AG04449 (cell line): ENCODE measurements at regions of chr14 and their contacts with region 1.

Region 1: DNA sequence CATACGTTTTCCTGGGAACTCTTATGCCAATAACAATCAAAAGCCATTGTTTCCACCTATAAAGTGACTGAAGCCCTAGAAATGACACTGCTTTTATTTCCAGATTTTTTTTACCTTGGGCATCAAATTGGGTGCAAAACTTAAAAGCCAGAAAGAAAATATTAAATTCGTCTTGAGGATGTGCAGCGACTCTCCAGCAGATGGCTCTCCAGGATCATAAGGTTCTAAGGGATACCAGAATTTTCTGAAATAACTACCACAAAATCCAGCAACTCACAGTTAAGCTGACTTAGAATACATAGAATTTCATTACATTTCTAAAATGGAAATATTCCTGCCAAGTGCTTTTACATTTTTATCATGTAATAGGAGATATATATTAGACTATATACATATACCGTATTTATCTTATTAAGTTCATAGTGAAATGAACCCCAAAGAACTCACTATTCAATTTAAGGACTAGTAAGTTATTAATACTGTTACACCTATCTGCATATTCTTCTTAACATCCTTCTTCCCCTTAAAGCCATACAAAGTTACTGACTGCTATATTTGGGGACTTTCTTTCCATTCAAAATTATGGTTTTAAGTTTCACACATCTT is 44.0 kb downstream of the ARMH4 start:
- DNase-seq: no peak
- H3K4me3 ChIP-seq: no peak overlapping the region
- CTCF ChIP-seq: peak; percentile 52

Region 2: DNA sequence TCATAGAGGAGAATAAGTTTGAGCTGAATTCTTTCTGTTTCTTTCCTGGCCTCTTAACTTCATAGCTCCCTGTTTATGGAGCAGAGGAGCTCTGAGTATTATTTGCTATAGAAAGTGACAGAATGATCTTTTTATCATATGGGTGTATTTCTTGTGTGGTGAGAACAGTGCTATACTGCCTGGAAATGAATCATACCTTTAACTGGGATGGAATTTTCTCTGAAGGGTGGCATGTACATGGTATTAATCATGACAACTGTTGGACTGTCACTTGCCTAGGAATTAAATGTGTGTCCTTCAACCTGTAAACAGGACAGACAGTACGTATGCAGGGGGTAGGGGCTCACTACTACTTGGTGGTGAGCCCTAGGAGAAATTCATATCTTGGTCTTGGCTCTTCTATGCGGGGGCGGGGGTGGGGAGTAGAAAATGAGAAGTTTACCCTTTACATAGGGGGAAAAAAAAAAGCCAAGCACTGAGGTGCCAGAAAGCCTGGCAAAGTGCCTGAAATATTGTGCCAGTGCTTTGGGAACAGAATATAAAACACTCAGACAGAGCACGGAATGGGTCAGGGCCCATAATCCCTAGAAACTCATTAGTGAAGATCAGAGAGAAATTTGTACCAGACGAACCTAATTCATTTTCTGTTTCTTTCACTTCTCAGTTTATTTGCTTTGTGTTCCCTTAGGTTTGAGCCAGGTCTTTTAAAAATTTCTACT is 10.2 kb after region 1 on chr14:
- CTCF ChIA-PET with region 1: interaction called, 18 read pairs
- POLR2A ChIA-PET with region 1: no interaction called
- DNase-seq: no peak
- H3K4me3 ChIP-seq: no peak overlapping the region
- CTCF ChIP-seq: no peak

Region 3: GRCh38 chr14:58166005-58166983 is 58.2 kb after region 1 on chr14:
- CTCF ChIA-PET with region 1: interaction called, 56 read pairs
- POLR2A ChIA-PET with region 1: interaction called, 4 read pairs
- DNase-seq: peak; percentile 23
- H3K4me3 ChIP-seq: no peak overlapping the region
- CTCF ChIP-seq: peak; percentile 84

Region 4: GRCh38 chr14:58362798-58363412 is 254.9 kb after region 1 on chr14:
- CTCF ChIA-PET with region 1: interaction called, 28 read pairs
- POLR2A ChIA-PET with region 1: no interaction called
- DNase-seq: no peak
- H3K4me3 ChIP-seq: no peak overlapping the region
- CTCF ChIP-seq: peak; percentile 25